ENCODE measurements at regions of chr6 and their contacts with region 1.

Region 1: GRCh38 chr6:5866547-5867101 is 140.1 kb downstream of the NRN1 start:
- DNase-seq: peak; percentile 95
- ATAC-seq: peak; percentile 97
- H3K4me3 ChIP-seq: peak overlapping the region; percentile 59
- H3K27ac ChIP-seq: peak overlapping the region; percentile 71
- H3K4me1 ChIP-seq: peaks cover 15% of the 10 kb centered on the region
- H3K27me3 ChIP-seq: no peaks in the 10 kb centered on the region
- CTCF ChIP-seq: no peak

Region 2: GRCh38 chr6:5562277-5562676 is 304.3 kb before region 1 on chr6:
- CTCF ChIA-PET with region 1: no interaction called
- POLR2A ChIA-PET with region 1: no interaction called
- intact Hi-C with region 1: loop called (anchors 2 kb)
- DNase-seq: no peak
- ATAC-seq: no peak
- H3K4me3 ChIP-seq: no peak overlapping the region
- H3K27ac ChIP-seq: no peak overlapping the region
- H3K4me1 ChIP-seq: peaks cover 12% of the 10 kb centered on the region
- H3K27me3 ChIP-seq: no peaks in the 10 kb centered on the region
- CTCF ChIP-seq: no peak

Region 3: GRCh38 chr6:5892669-5893068 is 26.0 kb after region 1 on chr6:
- CTCF ChIA-PET with region 1: no interaction called
- POLR2A ChIA-PET with region 1: interaction called, 11 read pairs
- intact Hi-C with region 1: loop called (anchors 2 kb)
- DNase-seq: no peak
- ATAC-seq: no peak
- H3K4me3 ChIP-seq: peak overlapping the region; percentile 61
- H3K27ac ChIP-seq: peak overlapping the region; percentile 43
- H3K4me1 ChIP-seq: peaks cover 7% of the 10 kb centered on the region
- H3K27me3 ChIP-seq: no peaks in the 10 kb centered on the region
- CTCF ChIP-seq: no peak

Measured in PC-3 (cell line).